ENCODE measurements at regions of chr1 and their contacts with region 1.

Region 1: DNA sequence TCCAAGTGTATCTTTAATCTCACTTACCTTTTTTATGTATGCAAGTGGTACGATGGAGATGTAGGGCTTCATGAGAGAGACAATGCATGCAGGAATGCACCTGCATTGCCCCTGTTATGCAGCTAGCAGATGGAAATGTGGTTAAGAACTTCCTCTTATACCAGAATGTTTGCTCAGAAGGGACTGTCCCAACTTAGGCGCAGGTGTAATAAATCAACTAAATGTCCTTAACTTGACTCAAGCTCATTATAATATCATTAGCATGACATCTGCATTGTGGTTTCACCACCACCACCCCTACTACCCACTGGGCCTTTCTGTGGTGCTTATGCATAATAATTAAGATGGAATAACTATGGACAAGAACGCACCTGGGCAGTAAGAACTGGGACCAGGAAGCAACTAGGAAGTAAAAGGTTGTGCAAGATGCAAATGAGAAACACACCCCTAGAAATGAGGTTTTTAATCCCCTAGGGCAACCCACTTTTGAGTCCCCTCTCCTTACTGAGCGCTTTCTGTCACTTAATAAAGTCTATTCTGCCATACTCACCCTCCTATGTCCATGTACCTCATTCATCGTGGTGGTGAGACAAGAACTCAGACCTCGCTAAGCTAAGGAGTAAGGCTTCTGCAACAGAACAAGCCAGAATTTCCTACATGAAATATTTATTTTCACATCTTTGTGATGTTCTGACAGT is 1103.3 kb upstream of the B3GALT2 start:
- DNase-seq: peak; percentile 35
- ATAC-seq: peak; percentile 91
- H3K4me3 Mint-ChIP-seq: peak overlapping the region; percentile 38
- H3K27ac Mint-ChIP-seq: peak overlapping the region; percentile 77
- H3K4me1 Mint-ChIP-seq: peaks cover 23% of the 10 kb centered on the region
- H3K27me3 Mint-ChIP-seq: peaks cover 3% of the 10 kb centered on the region
- CTCF ChIP-seq: no peak

Region 2: DNA sequence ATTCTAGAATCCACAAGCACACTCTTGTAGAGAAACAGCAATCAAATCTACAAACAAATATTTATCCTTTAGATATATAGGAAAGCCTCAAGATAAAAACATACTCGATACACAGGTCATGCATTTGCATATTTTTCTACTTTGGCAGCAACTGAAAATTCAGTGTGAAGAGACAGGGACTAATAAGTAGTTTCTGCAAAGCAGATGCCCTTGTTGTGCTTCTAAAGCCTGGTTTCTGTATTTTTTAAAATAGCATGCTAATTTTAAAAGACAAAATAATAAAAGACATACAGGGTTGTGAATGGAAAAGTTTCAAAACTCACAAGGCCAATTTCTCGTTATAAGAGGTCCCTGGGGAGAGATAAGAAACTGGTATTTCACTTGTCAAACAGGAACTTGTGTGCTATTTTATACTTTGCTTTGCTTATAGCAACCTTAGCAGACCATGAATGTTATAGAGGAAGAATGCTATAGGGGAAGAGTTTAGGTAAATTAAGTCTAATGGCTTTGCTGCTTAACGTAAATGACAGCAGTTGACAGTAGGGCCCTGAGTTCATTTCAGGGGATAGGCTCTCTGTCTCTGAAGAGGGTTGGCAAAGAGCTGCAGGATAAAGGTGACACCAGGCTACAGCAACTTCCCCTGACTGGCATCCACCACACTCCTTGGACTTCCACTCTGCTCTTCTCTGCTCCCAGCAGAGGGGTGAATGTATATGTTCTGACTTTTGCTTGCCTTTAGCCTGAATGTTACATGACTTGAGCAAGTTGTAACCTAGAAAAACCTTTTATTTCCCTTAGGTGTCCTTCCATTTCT is 1663.1 kb before region 1 on chr1:
- CTCF ChIA-PET with region 1: no interaction called
- POLR2A ChIA-PET with region 1: no interaction called
- intact Hi-C with region 1: loop called (anchors 1 kb)
- DNase-seq: no peak
- ATAC-seq: peak; percentile 90
- H3K4me3 Mint-ChIP-seq: peak overlapping the region; percentile 44
- H3K27ac Mint-ChIP-seq: no peak overlapping the region
- H3K4me1 Mint-ChIP-seq: peaks cover 19% of the 10 kb centered on the region
- H3K27me3 Mint-ChIP-seq: peaks cover 65% of the 10 kb centered on the region
- CTCF ChIP-seq: no peak

Region 3: DNA sequence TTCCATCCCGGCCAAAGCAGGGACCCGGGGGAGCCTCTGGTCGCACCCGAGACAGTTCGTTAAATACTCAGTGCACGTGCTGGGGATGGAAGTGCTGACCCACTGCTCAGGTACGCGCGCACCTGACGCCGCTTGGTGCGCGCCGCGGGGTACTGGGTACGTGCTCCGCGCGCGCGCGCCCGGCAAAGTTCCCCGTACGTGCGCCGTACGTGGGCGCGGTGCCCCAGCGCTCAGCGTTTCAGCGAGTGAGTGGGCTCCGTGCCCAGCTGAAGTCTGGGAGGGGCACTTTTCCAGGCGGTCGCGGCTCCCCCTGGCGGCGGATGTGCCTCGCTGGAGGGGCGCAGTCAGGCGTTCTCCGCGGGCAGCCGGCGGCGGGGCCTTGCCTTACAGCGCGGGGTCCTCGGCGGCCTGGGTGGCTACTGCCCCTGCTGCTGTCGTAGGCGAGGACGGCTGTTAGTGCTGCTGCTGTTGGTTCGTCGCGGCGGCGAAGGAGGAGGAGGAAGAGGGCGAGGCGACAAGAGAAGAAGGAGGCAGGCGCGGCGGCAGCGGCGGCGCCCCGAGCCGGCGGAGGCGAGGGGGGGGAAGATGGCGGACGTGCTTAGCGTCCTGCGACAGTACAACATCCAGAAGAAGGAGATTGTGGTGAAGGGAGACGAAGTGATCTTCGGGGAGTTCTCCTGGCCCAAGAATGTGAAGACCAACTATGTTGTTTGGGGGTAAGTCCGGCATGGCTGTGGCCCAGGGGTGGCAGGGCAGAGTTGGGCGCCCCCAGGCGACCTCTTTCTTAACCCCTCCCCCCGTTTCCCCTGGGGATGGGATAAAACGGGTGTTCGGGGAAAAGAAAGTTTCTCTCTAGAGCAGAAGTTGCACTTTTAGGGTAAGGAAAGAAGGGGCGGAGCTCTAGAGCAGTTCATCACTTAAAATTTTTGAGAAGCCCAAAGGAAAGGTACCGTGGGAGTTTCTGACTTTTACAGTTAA is 1167.8 kb before region 1 on chr1 and contains the start of gene CDC73:
- CTCF ChIA-PET with region 1: no interaction called
- POLR2A ChIA-PET with region 1: no interaction called
- intact Hi-C with region 1: loop called (anchors 1 kb)
- DNase-seq: peak; percentile 99
- ATAC-seq: peak; percentile 90
- H3K4me3 Mint-ChIP-seq: peak within 1 kb of the TSS; percentile 93
- H3K27ac Mint-ChIP-seq: peak within 1 kb of the TSS; percentile 94
- H3K4me1 Mint-ChIP-seq: peaks cover 43% of the 10 kb centered on the region
- H3K27me3 Mint-ChIP-seq: no peaks in the 10 kb centered on the region
- CTCF ChIP-seq: peak; percentile 17
- total RNA-seq, gene CDC73: 55.9 and 59.1 TPM in 2 replicates

Region 4: DNA sequence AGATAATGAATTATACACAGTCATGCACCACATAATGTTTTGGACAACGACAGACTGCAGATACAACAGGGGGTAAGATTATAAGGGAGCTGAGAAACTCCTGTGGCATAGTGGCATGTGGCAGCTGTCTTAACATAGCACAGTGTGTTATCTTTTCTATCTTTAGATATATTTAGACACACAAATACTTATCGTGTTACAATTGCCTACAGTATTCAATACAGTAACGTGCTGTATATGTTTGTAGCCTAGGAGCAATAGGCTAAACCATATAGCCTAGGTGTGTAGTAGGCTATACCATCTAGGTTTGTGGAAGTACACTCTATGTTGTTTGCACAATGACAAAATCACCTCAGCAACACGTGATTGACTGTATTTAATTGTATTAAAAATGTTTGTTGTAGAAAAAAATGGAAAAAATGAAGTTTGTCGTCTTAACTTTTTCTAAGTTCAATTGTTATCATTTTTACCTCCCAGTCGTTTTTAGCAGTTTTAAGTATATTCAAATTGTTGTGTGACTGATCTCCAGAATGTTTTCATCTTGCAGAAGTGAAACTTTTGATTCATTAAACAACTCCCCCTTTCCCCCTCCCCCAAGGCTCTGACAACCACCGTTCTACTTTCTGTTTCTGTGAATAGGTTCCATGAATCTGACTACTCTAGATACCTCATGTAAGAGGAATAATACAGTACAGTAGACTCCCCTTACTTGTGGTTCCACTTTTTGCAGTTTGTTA is 752.3 kb before region 1 on chr1:
- CTCF ChIA-PET with region 1: no interaction called
- POLR2A ChIA-PET with region 1: no interaction called
- intact Hi-C with region 1: loop called (anchors 1 kb)
- DNase-seq: peak; percentile 25
- ATAC-seq: peak; percentile 95
- H3K4me3 Mint-ChIP-seq: peak overlapping the region; percentile 17
- H3K27ac Mint-ChIP-seq: peak overlapping the region; percentile 88
- H3K4me1 Mint-ChIP-seq: peaks cover 48% of the 10 kb centered on the region
- H3K27me3 Mint-ChIP-seq: no peaks in the 10 kb centered on the region
- CTCF ChIP-seq: no peak

Region 5: GRCh38 chr1:194277927-194278326 is 11.8 kb before region 1 on chr1:
- CTCF ChIA-PET with region 1: no interaction called
- POLR2A ChIA-PET with region 1: interaction called, 6 read pairs
- intact Hi-C with region 1: loop called (anchors 1 kb)
- DNase-seq: no peak
- ATAC-seq: peak; percentile 60
- H3K4me3 Mint-ChIP-seq: no peak overlapping the region
- H3K27ac Mint-ChIP-seq: no peak overlapping the region
- H3K4me1 Mint-ChIP-seq: peaks cover 22% of the 10 kb centered on the region
- H3K27me3 Mint-ChIP-seq: peaks cover 4% of the 10 kb centered on the region
- CTCF ChIP-seq: no peak

Region 6: GRCh38 chr1:194366705-194367104 is 77.0 kb after region 1 on chr1:
- CTCF ChIA-PET with region 1: no interaction called
- POLR2A ChIA-PET with region 1: no interaction called
- intact Hi-C with region 1: no loop called
- DNase-seq: no peak
- ATAC-seq: no peak
- H3K4me3 Mint-ChIP-seq: no peak overlapping the region
- H3K27ac Mint-ChIP-seq: no peak overlapping the region
- H3K4me1 Mint-ChIP-seq: no peaks in the 10 kb centered on the region
- H3K27me3 Mint-ChIP-seq: no peaks in the 10 kb centered on the region
- CTCF ChIP-seq: no peak

Measured in activated B cell treated with CpG ODN at 0.5 μM for 24 hours (primary cell).